H1 (cell line): ENCODE measurements at regions of chrX and their contacts with region 1.

Region 1: DNA sequence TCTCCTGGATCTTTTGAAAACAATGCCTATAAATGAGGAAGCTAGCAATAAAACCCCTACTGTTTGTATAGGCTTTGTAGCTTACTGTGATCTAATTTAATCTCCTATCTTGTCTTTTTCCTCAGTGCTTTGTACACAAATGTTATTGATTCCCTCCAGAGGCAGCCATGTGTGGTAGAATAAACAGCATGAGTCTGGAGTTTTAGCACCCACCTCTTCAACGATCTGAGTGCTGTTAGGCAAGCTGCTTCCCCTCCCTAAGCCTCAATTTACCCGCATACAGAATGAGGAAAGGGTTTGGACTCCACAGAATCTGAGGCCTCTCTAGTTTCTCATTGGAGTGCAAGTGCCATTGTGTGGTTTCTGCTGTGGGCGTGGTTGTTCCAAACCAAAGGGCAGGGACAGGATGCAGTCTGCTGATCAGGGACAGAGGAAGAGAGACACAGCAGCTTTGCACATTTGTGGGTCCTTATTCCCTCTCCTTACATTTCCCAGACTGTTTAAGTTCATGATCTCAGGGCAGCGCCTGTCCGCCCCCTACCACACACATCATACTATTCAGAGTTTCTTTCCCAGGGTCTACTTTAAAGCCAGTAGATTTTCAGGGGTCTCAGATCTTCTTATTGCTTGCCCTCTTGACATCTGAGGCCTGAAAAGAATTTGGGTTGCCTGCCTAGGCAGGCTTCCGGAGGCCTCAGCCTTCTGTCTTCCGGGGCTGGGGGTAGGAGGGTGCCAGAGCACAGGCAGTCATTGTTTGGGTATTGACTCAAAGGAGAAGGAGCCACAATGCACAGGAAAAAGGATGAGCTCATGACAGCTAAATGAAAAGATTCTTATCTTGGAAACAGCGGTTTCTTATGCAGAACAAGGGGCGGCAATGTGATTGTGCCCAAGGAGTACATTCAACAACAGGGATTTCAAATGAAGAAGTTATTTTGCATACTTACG is 114.9 kb upstream of the TEX13D start:
- DNase-seq: no peak
- H3K4me3 ChIP-seq: peak overlapping the region in 1 of 4 experiments; percentile 12; a peak in 1 of 8 replicates
- H3K27ac ChIP-seq: no peak overlapping the region; the same call in 1 of the 2 replicates
- H3K4me1 ChIP-seq: peaks cover 5 to 14% (median 9%) of the 10 kb centered on the region in 4 experiments; a peak in 4 of 7 replicates
- H3K27me3 ChIP-seq: no peaks in the 10 kb centered on the region
- CTCF ChIP-seq: no peak
- EP300 ChIP-seq: no peak
- POLR2A ChIP-seq: no peak
- RAD21 ChIP-seq: no peak

Region 2: DNA sequence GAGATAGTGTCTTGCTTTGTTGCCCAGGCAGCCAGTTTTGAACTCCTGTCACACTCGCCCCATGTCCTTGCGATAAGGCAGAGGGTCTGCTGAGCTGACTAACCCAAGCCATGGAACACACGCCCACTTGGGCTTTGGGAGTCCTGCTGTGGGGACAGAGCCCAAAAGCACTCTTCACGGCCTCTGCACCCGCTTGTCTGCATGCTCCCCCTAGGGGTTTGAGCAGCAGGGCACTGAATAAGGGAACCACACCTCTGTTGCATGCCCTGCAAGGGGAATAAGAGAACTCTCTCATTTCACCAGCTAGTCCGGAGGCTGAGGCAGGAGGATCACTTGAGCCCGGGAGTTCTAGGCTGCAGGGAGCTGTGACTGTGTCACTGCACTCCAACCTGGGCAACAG is 90.1 kb before region 1 on chrX:
- CTCF ChIA-PET with region 1: no interaction called
- POLR2A ChIA-PET with region 1: no interaction called
- DNase-seq: no peak
- H3K4me3 ChIP-seq: no peak overlapping the region
- H3K27ac ChIP-seq: no peak overlapping the region
- H3K4me1 ChIP-seq: no peaks in the 10 kb centered on the region
- H3K27me3 ChIP-seq: no peaks in the 10 kb centered on the region
- CTCF ChIP-seq: peak in 2 of 3 experiments; percentile 12 to 21; a peak in 1 of 4 replicates
- EP300 ChIP-seq: no peak
- POLR2A ChIP-seq: no peak
- RAD21 ChIP-seq: peak in 1 of 2 experiments; percentile 13; a peak in 1 of 4 replicates

Region 3: DNA sequence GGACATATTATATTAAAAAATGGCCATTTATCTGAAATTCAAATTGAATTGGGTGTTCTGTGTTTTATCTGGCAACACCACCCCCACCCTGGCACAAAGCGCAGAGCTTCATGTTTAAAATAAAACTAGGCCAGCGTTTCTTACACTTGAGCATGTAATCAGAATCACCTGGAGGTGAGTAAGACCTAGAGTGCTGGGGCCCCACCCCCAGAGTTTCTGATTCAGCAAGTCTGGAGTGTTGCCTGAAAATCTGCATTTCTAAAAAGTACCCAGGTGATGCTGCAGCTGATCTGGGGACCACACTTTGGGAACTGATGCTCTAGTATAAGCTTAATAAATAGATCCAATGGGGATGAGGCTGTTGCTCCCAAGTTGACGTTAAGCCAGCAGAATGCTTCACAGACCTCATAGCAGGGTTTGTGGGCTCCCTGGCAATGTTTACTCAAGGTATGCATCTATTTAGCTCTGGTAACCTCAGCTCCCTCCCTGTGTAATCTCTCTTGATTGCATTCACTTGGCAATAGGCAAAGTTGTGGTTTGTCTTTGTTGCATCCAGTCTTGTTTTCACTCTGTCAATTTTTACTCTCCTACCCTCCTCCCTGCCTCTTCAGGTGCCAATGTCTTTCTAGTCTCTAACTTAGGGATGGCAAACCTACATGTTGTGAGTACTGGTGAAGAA is 15.1 kb after region 1 on chrX:
- CTCF ChIA-PET with region 1: interaction called, 10 read pairs
- POLR2A ChIA-PET with region 1: interaction called, 4 read pairs
- DNase-seq: no peak
- H3K4me3 ChIP-seq: no peak overlapping the region
- H3K27ac ChIP-seq: no peak overlapping the region
- H3K4me1 ChIP-seq: peaks cover 4 to 13% (median 11%) of the 10 kb centered on the region in 4 experiments; a peak in 5 of 7 replicates
- H3K27me3 ChIP-seq: peaks cover 0 to 3% (median 1%) of the 10 kb centered on the region in 4 experiments; a peak in 1 of 7 replicates
- CTCF ChIP-seq: no peak
- EP300 ChIP-seq: no peak
- POLR2A ChIP-seq: no peak
- RAD21 ChIP-seq: no peak

Region 4: GRCh38 chrX:124282580-124282979 is 65.0 kb after region 1 on chrX:
- CTCF ChIA-PET with region 1: no interaction called
- POLR2A ChIA-PET with region 1: no interaction called
- DNase-seq: no peak
- H3K4me3 ChIP-seq: no peak overlapping the region
- H3K27ac ChIP-seq: no peak overlapping the region
- H3K4me1 ChIP-seq: peaks cover 0 to 3% (median 1%) of the 10 kb centered on the region in 4 experiments; a peak in 1 of 7 replicates
- H3K27me3 ChIP-seq: no peaks in the 10 kb centered on the region
- CTCF ChIP-seq: no peak
- EP300 ChIP-seq: no peak
- POLR2A ChIP-seq: no peak
- RAD21 ChIP-seq: no peak